ENCODE measurements at regions of chr3 and their contacts with region 1.

Region 1: DNA sequence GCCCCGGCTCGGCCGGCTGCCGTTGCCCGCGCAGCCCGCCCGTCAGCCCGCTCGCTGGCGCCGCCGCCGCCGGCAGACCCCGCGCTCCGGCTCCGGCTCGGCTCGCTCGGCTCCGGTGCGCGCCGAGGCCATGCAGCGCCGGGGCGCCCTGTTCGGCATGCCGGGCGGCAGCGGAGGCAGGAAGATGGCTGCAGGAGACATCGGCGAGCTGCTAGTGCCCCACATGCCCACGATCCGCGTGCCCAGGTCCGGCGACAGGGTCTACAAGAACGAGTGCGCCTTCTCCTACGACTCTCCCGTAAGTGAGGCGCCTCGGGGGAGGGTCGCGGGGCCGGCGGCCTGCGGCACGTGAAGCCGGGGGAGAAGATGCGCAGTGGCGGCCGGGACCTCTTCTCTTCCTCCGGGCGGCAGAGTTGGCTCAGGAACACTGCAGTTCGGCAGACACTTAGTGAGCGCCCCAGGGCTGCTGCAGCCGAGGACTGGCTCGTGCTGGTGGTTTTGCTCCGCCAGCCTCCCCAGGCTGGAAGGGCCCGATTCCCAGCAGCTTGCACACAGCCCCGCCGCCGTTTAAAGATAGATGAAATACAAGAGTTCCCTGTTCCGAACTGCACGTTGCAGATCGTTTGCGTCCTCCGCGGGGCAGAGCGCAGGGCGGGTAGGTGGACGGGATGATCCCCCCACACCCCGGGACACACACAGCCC is 407 bp downstream of the USP13 start:
- DNase-seq: peak; percentile 31 to 64 (median 44)
- ATAC-seq: peak; percentile 86
- H3K4me3 ChIP-seq: peak overlapping the region; percentile 55
- H3K27ac ChIP-seq: no peak overlapping the region
- H3K4me1 ChIP-seq: peaks cover 0 to 18% of the 10 kb centered on the region in 2 experiments; a peak in 3 of 5 replicates
- H3K27me3 ChIP-seq: peaks cover 6 to 10% of the 10 kb centered on the region in 2 experiments; a peak in 3 of 5 replicates
- CTCF ChIP-seq: peak in 1 of 3 experiments; percentile 21; a peak in 1 of 6 replicates
- EP300 ChIP-seq: no peak
- POLR2A ChIP-seq: no peak
- RAD21 ChIP-seq: peak in 1 of 2 experiments; percentile 35; a peak in 2 of 4 replicates

Region 2: DNA sequence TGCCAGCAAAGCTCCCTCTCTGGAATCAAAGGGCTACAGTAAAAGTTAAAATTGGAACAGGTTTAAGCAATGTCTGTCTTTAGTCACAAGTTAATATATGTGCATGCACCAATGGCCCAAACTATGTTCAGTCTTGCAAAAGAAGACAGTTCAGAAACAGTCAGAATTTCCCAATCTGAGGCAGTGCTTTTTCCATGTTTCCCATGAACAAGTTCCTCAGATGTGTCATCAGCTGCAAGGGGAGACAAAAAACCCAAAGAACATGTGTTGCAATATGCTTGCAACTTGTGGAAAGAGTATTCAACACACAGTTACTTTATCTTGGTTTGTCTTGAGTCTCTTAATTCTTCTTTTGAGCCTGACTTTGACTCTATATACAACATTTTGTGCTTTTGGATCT is 148.0 kb after region 1 on chr3:
- CTCF ChIA-PET with region 1: no interaction called
- POLR2A ChIA-PET with region 1: no interaction called
- in situ Hi-C with region 1: no loop called
- intact Hi-C with region 1: loop called (anchors 10 kb)
- DNase-seq: no peak
- ATAC-seq: no peak
- H3K4me3 ChIP-seq: no peak overlapping the region
- H3K27ac ChIP-seq: no peak overlapping the region
- H3K4me1 ChIP-seq: no peaks in the 10 kb centered on the region
- H3K27me3 ChIP-seq: peaks cover 0 to 3% of the 10 kb centered on the region in 2 experiments; a peak in 1 of 5 replicates
- CTCF ChIP-seq: no peak
- EP300 ChIP-seq: no peak
- POLR2A ChIP-seq: no peak
- RAD21 ChIP-seq: no peak

Region 3: GRCh38 chr3:180026997-180027396 is 373.8 kb after region 1 on chr3:
- CTCF ChIA-PET with region 1: no interaction called
- POLR2A ChIA-PET with region 1: no interaction called
- in situ Hi-C with region 1: no loop called
- intact Hi-C with region 1: no loop called
- DNase-seq: no peak
- ATAC-seq: no peak
- H3K4me3 ChIP-seq: no peak overlapping the region
- H3K27ac ChIP-seq: no peak overlapping the region
- H3K4me1 ChIP-seq: no peaks in the 10 kb centered on the region
- H3K27me3 ChIP-seq: no peaks in the 10 kb centered on the region
- CTCF ChIP-seq: no peak
- EP300 ChIP-seq: no peak
- POLR2A ChIP-seq: no peak
- RAD21 ChIP-seq: no peak

Measured in K562 (cell line).